ENCODE measurements at regions of chr7 and their contacts with region 1.

Region 1: GRCh38 chr7:30225863-30226613 is 58.4 kb upstream of the ZNRF2 start:
- DNase-seq: no peak
- H3K4me3 ChIP-seq: no peak overlapping the region
- H3K27ac ChIP-seq: no peak overlapping the region
- H3K4me1 ChIP-seq: no peaks in the 10 kb centered on the region
- H3K27me3 ChIP-seq: no peaks in the 10 kb centered on the region
- CTCF ChIP-seq: no peak
- EP300 ChIP-seq: no peak
- POLR2A ChIP-seq: no peak
- RAD21 ChIP-seq: no peak

Region 2: DNA sequence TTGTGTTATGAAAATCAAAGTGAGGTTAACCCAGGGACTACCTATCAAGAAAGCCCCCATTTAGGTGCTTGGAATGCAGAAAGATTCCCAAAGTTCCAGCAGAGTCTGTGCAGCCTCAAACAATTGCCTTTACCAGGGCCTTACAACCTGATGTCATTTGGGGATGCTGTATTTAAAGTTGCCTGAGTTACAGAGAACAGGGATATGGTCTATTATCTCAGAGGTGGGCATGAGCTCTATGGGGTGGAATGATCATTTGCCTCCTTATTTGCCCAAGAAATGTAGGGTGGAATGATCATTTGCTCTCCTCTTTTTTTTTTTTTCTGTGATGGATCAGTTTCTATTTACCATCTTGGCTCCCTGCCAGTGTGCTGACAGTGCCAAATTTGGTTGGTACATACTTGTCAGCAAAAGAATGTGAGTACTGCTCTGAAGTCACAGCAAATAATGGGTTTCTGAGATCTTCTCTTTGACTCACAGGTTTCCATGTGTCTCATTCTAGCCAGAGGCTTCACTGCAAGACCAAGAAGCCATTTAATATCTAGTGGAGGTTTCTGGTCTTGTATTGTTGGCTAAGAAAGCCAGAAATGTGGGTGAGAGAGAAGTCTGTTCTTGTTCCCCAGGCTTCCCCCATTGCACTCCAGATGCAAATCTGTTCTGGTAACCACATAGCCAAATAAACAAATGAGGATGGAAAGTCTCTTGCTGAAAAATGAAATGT is 12.8 kb after region 1 on chr7:
- CTCF ChIA-PET with region 1: interaction called, 12 read pairs
- POLR2A ChIA-PET with region 1: no interaction called
- DNase-seq: no peak
- H3K4me3 ChIP-seq: no peak overlapping the region
- H3K27ac ChIP-seq: no peak overlapping the region
- H3K4me1 ChIP-seq: no peaks in the 10 kb centered on the region
- H3K27me3 ChIP-seq: no peaks in the 10 kb centered on the region; a peak in 1 of 7 replicates
- CTCF ChIP-seq: no peak
- EP300 ChIP-seq: no peak
- POLR2A ChIP-seq: no peak
- RAD21 ChIP-seq: no peak

Region 3: GRCh38 chr7:30322271-30323005 is 96.4 kb after region 1 on chr7:
- CTCF ChIA-PET with region 1: no interaction called
- POLR2A ChIA-PET with region 1: no interaction called
- DNase-seq: no peak
- H3K4me3 ChIP-seq: no peak overlapping the region
- H3K27ac ChIP-seq: no peak overlapping the region
- H3K4me1 ChIP-seq: peaks cover 4 to 20% (median 11%) of the 10 kb centered on the region in 4 experiments; a peak in 5 of 7 replicates
- H3K27me3 ChIP-seq: no peaks in the 10 kb centered on the region
- CTCF ChIP-seq: no peak
- EP300 ChIP-seq: no peak
- POLR2A ChIP-seq: no peak
- RAD21 ChIP-seq: no peak

Region 4: DNA sequence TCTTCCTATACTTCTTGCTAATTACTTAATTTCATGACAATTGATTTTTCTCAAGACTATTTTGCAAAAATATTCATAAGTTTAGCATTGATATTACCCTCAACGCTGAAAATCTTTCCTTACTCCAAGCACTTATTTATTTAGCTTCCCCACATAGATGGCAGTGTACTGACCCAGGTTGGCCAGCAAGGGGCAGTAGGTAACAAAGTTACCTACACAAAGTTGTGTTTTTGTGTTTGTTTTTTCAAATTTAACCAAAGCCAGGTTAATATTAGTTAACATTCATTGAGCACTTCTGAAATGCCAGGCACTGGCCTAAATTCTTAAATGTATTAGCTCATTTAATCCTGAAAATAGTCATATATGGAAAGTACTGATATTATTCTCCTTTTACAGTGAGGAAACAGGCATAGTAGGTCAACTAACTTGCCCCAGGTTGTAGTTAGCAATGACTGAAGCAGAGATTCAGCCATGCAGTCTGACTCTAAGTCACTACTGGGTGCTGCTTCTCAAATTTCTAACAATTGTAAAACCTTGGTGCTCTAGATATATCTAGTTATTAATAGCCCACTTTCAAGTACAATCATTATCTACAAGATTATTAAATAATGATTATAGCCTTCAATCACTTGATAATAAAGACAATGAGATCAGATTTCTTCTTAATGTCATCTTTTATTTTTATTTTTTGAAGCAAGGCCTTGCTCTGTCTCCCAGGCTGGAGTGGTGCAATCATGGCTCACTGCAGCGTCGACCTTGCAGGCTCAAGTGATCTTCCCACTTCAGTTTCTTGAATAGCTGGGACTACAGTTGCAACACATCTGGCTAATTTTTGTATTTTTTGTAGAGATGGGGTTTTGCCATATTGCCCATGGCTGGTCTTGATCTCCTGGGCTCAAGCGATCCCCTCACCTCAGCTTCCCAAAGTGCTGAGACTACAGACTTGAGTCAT is 284.4 kb after region 1 on chr7:
- CTCF ChIA-PET with region 1: no interaction called
- POLR2A ChIA-PET with region 1: no interaction called
- DNase-seq: no peak
- H3K4me3 ChIP-seq: no peak overlapping the region
- H3K27ac ChIP-seq: no peak overlapping the region
- H3K4me1 ChIP-seq: no peaks in the 10 kb centered on the region
- H3K27me3 ChIP-seq: no peaks in the 10 kb centered on the region
- CTCF ChIP-seq: peak in 2 of 3 experiments; percentile 74 to 75; a peak in 3 of 4 replicates
- EP300 ChIP-seq: no peak
- POLR2A ChIP-seq: no peak
- RAD21 ChIP-seq: peak; percentile 74 to 75

Measured in H1 (cell line).